Caco-2 (cell line): ENCODE measurements at regions of chr5 and their contacts with region 1.

Region 1: GRCh38 chr5:80747922-80748321 is 93.1 kb upstream of the DHFR start:
- DNase-seq: peak in 1 of 2 experiments; percentile 64
- H3K4me3 ChIP-seq: no peak overlapping the region
- H3K4me3 Mint-ChIP-seq: no peak overlapping the region
- H3K27ac Mint-ChIP-seq: no peak overlapping the region
- H3K4me1 ChIP-seq: peaks cover 19% of the 10 kb centered on the region
- H3K4me1 Mint-ChIP-seq: peaks cover 8% of the 10 kb centered on the region
- H3K27me3 ChIP-seq: no peaks in the 10 kb centered on the region
- H3K27me3 Mint-ChIP-seq: no peaks in the 10 kb centered on the region
- CTCF ChIP-seq: no peak

Region 2: DNA sequence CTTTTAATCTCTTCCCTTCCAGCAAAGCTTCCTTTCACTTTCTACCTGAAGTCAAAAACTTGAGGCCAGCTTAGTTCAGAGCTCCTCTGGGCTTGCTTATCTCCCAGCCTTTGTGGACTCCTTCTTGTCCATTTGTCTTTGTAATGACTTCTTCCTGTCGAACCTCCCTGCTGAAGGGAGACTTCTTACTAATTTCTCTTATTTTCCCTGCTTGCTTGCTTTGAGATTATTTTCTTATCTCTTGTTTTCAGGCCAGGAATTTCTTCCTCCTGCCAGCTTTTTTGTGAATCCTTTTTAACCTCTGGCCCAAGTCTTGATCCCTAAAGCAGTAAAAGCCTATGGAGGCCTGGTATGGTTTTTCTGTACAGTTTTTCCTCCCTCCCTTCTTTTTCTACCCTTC is 46.3 kb before region 1 on chr5:
- CTCF ChIA-PET with region 1: no interaction called
- POLR2A ChIA-PET with region 1: no interaction called
- intact Hi-C with region 1: loop called (anchors 1 kb)
- DNase-seq: peak in 1 of 2 experiments; percentile 22
- H3K4me3 ChIP-seq: no peak overlapping the region
- H3K4me3 Mint-ChIP-seq: no peak overlapping the region
- H3K27ac Mint-ChIP-seq: no peak overlapping the region
- H3K4me1 ChIP-seq: peaks cover 14% of the 10 kb centered on the region
- H3K4me1 Mint-ChIP-seq: peaks cover 12% of the 10 kb centered on the region
- H3K27me3 ChIP-seq: no peaks in the 10 kb centered on the region
- H3K27me3 Mint-ChIP-seq: no peaks in the 10 kb centered on the region
- CTCF ChIP-seq: no peak